BJ (cell line): ENCODE measurements at regions of chr1 and their contacts with region 1.

Region 1: DNA sequence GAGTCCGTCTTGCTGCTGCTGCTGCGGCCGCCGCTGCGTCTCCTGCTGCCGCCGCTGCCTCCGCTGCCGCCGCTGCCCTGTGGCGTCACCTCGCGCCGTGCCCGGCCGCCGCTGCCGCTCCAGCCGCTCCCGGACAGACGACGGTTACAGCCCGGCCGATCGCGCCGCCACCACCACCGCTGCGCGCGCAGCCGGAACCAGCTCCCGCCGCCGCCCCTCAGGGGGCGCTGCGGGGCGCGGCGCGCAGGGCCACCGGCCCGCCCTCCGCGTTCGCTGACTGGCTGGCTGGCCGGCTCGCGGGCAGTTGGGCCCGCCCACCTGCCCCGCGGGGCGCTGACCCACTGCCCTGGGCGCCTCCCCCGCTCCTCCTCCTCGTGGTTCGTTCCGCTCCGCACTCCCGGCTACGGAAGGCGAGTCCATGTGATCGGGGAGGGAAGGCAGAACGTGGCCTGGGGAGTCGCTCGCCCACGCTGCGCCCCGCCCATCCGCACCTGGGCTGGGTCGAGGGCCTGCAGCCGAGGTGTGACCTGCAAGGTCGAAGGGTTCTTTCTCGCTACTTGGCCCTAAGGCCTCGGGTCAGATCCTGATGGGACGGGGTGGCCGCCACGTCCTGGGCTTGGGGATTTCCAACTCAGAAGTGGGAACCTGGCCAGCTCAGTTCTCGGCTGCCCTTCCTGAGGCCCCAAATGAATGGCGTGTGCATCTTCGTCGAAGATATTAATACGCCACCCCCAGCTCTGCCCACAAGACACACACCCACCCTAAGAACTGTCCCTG is at the start of gene PTP4A2:
- DNase-seq: peak; percentile 49
- H3K4me3 ChIP-seq: peak within 1 kb of the TSS; percentile 76
- H3K27me3 ChIP-seq: no peaks in the 10 kb centered on the region
- CTCF ChIP-seq: no peak
- polyA plus RNA-seq, gene PTP4A2: 239 and 455 TPM in 2 replicates

Region 2: DNA sequence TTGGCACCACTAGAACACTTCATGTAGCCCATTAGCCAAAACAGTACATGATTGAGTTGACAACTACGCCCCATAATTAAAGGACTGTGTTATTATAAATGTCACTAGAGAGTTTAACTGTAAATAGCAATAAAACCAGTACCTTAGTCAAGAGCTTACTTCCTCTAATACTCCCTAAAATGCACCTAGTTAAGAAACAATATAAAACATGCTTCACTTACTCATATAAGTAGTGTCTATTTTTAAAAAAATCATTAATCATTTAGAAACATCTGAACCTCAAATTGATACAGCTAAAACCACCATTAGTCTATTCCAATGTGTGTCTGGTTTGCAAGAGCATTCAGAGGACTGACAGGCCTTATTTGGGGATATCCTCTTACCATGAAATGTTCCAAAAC is 25.5 kb before region 1 on chr1:
- CTCF ChIA-PET with region 1: no interaction called
- POLR2A ChIA-PET with region 1: no interaction called
- DNase-seq: no peak
- H3K4me3 ChIP-seq: no peak overlapping the region
- H3K27me3 ChIP-seq: no peaks in the 10 kb centered on the region
- CTCF ChIP-seq: no peak

Region 3: DNA sequence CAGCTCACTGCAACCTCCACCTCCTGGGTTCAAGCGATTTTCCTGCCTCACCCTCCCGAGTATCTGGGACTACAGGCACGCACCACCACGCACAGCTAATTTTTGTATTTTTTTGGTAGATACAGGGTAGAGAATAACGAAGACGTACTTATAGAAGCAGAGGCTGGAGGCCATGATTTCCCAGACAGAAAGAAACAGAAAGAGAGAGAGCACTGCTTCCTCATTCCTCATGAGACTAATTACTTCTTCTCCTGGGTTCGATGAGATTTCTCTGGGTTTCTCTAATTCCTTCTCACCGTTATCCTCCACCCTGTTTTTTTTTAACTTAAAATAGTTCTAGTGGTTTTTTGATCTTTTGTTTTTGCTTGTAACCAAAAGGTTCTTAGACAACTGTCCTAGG is 23.2 kb after region 1 on chr1:
- CTCF ChIA-PET with region 1: interaction called, 46 read pairs
- POLR2A ChIA-PET with region 1: interaction called, 3 read pairs
- DNase-seq: no peak
- H3K4me3 ChIP-seq: no peak overlapping the region
- H3K27me3 ChIP-seq: no peaks in the 10 kb centered on the region
- CTCF ChIP-seq: no peak